Calu3 (cell line): ENCODE measurements at regions of chr15 and their contacts with region 1.

Region 1: DNA sequence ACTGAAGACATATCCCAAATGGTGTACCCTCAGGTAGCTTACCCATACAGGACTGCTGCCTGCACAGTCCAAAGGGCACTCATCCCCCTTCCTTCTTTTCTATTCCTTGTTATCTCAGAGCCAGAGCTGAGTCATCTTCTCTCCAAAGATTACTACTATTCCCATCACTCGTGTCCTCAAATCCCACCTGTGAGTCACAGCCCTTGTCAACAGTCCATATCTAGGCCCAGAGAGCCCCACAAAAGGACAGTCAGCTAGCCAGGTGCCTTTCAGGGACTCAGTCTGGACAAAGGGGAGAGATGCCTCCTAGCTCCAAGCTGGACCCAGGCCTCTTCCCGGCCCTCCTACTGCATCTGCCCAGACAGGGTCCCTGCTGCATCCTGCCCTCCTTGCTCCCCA is 11.0 kb downstream of the PARP16 start:
- DNase-seq: no peak
- H3K4me3 Mint-ChIP-seq: no peak overlapping the region
- H3K27ac Mint-ChIP-seq: no peak overlapping the region
- H3K4me1 Mint-ChIP-seq: peaks cover 17% of the 10 kb centered on the region
- H3K27me3 Mint-ChIP-seq: no peaks in the 10 kb centered on the region
- CTCF ChIP-seq: no peak

Region 2: DNA sequence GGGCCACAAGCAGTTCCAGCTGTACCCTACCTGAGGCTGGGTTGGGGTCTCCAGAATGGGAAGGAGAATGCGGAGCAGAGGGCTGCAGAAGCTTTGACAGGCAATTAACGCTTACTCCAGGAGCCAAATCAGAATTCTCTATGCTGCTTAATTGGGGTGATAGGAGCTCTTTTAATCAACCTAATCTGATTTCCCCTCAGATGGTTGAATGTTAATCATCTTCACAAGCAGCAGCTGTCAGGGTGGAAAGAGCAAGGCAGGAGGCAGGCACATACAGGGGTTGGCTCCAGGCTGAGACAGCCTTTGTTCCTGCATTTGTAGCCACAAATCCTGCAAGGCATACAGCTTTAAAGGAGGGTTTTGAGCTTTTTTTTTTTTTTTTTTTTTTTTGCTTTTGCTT is 67.1 kb before region 1 on chr15:
- CTCF ChIA-PET with region 1: interaction called, 11 read pairs
- intact Hi-C with region 1: no loop called
- DNase-seq: no peak
- H3K4me3 Mint-ChIP-seq: no peak overlapping the region
- H3K27ac Mint-ChIP-seq: no peak overlapping the region
- H3K4me1 Mint-ChIP-seq: no peaks in the 10 kb centered on the region
- H3K27me3 Mint-ChIP-seq: peaks cover 66% of the 10 kb centered on the region
- CTCF ChIP-seq: no peak

Region 3: GRCh38 chr15:65318870-65319356 is 43.2 kb after region 1 on chr15:
- CTCF ChIA-PET with region 1: no interaction called
- intact Hi-C with region 1: no loop called
- DNase-seq: peak; percentile 88
- H3K4me3 Mint-ChIP-seq: no peak overlapping the region
- H3K27ac Mint-ChIP-seq: no peak overlapping the region
- H3K4me1 Mint-ChIP-seq: no peaks in the 10 kb centered on the region
- H3K27me3 Mint-ChIP-seq: peaks cover 56% of the 10 kb centered on the region
- CTCF ChIP-seq: peak; percentile 92